PC-3 (cell line): ENCODE measurements at regions of chr10 and their contacts with region 1.

Region 1: DNA sequence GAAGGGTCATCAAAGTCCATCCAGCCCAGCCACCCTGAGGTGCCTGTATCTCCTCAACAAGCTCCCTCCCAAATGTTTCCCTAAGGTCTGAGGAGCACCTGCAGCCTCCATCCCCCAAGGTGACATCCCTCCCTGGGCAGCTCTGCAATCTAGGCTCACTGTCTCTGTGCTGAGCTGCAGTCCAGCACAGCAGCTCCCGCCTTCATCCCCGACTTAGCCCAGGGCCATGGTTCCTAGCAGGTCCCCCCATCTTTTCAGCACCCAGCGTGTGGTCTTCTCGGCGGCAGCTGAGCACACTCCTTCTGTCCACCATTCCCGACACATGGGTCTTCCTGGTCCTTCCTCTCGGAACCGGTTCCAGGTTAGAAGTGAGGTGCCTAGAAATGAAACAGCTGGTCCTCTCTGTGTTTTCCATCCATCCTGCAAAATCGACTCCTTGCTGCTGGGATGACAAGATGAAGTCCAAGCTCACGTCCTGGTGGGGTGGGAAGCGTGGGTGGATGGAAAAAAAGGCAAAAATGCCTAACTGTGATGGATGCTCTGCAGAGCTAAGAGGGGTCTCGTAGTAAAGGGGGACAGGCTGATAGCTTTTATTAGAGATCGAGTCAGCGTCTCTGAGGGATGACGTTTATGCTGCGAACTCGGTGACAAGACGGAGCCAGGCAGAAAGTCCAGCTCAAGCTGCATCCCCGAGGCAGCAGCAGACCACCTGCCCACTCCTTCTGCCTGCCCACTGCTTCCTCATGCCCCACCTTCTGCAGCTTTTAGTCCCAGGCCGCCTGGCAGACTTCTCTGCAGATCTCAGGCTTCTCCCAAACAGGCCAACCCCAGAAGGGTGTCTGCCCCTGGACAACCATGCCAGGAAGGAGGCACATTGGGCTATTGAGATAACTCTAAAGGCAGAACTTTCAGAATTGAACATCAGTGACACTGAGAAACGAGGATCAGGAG is 14.1 kb downstream of the CALML5 start:
- DNase-seq: no peak
- ATAC-seq: no peak
- H3K4me3 ChIP-seq: no peak overlapping the region
- H3K27ac ChIP-seq: no peak overlapping the region
- H3K4me1 ChIP-seq: peaks cover 12% of the 10 kb centered on the region
- H3K27me3 ChIP-seq: no peaks in the 10 kb centered on the region
- CTCF ChIP-seq: no peak

Region 2: GRCh38 chr10:5861269-5862031 is 376.2 kb after region 1 on chr10:
- CTCF ChIA-PET with region 1: no interaction called
- POLR2A ChIA-PET with region 1: interaction called, 16 read pairs
- intact Hi-C with region 1: no loop called
- DNase-seq: peak; percentile 76
- ATAC-seq: peak; percentile 99
- H3K4me3 ChIP-seq: no peak overlapping the region
- H3K27ac ChIP-seq: peak overlapping the region; percentile 87
- H3K4me1 ChIP-seq: peaks cover 5% of the 10 kb centered on the region
- H3K27me3 ChIP-seq: no peaks in the 10 kb centered on the region
- CTCF ChIP-seq: no peak